ENCODE measurements at regions of chr1 and their contacts with region 1.

Region 1: DNA sequence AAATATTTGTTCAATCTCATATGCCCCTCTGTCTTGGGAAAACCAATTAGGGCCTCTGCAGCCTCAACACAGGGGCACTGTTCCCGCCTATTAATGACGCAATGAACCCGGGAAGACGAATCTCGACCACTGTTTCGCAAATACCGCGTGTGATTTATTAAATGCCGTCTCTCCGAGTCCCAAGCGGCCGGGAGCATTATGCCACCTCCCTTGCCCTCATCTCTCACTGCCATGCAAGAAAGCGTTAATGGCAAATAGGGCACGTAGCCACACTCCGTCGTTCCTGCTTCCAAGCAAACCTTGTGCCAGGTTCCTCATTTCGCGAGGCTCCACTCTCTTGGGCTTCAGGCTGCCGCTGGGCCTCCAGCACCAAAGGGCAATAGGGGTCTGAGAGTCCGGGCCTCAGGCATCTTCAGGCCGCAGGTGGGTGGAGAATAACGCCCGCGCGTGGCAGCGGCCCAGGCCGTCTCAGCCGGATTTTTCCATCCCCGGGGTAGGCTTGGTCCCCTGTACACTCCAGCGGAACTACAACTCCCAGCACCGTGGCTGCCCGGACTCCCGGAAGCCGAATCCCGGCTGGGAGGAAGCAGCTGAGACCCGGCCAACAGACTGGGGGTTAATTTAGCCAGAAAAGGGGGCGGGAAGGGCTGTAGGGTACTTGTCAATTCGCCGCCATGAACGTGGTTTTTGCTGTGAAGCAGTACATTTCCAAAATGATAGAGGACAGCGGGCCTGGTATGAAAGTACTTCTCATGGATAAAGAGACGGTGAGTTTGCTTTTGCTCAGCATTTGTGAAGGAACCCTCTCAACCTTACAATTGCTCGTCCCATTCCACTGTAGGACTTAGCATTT is at the start of gene VPS45:
- DNase-seq: peak; percentile 93
- ATAC-seq: peak; percentile 97
- total RNA-seq, gene VPS45: 50.6 TPM

Region 2: GRCh38 chr1:149997585-149998262 is 69.7 kb before region 1 on chr1:
- intact Hi-C with region 1: no loop called
- DNase-seq: no peak
- ATAC-seq: no peak

Region 3: DNA sequence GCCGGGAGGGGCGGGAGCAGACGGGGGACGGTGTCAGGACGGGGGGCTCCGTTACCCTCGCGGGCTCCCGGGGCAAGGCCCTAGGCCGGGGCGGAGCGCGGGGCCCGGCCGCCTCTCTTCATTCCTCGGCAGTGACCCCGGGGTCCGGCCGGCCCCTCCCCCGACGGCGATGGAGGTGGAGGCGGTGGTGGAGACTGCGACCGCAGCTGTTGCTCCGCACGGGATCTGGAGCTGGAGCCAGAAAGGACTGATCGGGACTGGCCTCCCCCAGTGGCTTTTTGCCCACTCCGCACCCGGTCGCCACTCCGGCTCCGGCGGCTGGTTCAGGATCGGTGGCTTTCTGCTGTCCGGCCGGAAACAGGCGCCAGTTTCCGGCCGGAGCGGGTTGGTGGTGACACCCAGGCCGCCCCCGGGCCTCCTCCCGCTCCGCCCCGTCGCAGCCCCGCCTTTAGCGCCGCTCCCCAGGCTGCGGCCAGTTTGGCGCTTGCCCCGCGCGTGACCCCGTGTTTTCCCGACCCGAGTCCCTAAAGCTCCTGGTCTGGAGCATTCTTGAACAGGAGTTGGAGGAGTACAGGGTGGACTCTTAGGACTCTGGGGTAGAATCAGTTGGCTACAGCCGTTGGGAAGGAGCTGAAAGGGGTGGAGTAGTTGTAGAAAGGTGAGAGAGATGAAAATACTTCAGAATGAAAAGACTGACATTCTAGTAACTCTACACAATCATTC is 56.9 kb before region 1 on chr1 and contains the start of gene OTUD7B:
- intact Hi-C with region 1: loop called (anchors 2 kb)
- DNase-seq: peak; percentile 92
- ATAC-seq: peak; percentile 96
- total RNA-seq, gene OTUD7B: 23.0 TPM

Measured in left ventricle myocardium superior (tissue), 1 donor.